SK-N-SH (cell line): ENCODE measurements at regions of chr4 and their contacts with region 1.

Region 1: GRCh38 chr4:42371306-42372252 is 25.7 kb upstream of the SHISA3 start:
- DNase-seq: peak; percentile 77
- H3K4me3 ChIP-seq: no peak overlapping the region
- H3K27ac ChIP-seq: peak overlapping the region in 1 of 2 experiments; percentile 44; a peak in 1 of 4 replicates
- H3K4me1 ChIP-seq: peaks cover 0 to under 1% of the 10 kb centered on the region in 2 experiments; a peak in 1 of 4 replicates
- H3K27me3 ChIP-seq: no peaks in the 10 kb centered on the region; the same call in 1 of the 2 replicates
- CTCF ChIP-seq: peak; percentile 79
- EP300 ChIP-seq: no peak
- RAD21 ChIP-seq: peak; percentile 91

Region 2: GRCh38 chr4:42331914-42332368 is 39.6 kb before region 1 on chr4:
- CTCF ChIA-PET with region 1: interaction called, 10 read pairs
- POLR2A ChIA-PET with region 1: no interaction called
- DNase-seq: no peak
- H3K4me3 ChIP-seq: no peak overlapping the region
- H3K27ac ChIP-seq: no peak overlapping the region
- H3K4me1 ChIP-seq: no peaks in the 10 kb centered on the region; a peak in 1 of 4 replicates
- H3K27me3 ChIP-seq: no peaks in the 10 kb centered on the region
- CTCF ChIP-seq: no peak
- EP300 ChIP-seq: no peak
- RAD21 ChIP-seq: no peak

Region 3: DNA sequence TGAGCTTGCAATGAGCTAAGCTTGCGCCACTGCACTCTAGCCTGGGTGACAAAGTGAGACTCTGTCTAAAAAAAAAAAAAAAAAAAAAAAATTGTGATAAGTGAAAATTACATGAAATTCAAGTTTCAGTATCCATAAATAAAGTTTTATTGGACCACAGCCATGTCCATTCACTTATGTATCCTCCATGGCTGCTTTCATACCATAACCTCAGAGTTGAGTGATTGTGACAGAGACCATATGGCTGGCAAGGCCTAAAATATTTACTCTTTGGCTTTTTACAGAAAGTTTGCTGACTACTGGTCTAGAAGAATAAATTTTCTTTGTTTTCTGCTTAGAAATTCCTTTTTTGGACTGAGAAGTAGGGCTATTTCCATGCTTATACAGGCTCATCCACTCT is 13.9 kb after region 1 on chr4:
- CTCF ChIA-PET with region 1: interaction called, 19 read pairs
- POLR2A ChIA-PET with region 1: no interaction called
- DNase-seq: no peak
- H3K4me3 ChIP-seq: no peak overlapping the region
- H3K27ac ChIP-seq: no peak overlapping the region
- H3K4me1 ChIP-seq: no peaks in the 10 kb centered on the region
- H3K27me3 ChIP-seq: no peaks in the 10 kb centered on the region
- CTCF ChIP-seq: no peak
- EP300 ChIP-seq: no peak
- RAD21 ChIP-seq: no peak

Region 4: DNA sequence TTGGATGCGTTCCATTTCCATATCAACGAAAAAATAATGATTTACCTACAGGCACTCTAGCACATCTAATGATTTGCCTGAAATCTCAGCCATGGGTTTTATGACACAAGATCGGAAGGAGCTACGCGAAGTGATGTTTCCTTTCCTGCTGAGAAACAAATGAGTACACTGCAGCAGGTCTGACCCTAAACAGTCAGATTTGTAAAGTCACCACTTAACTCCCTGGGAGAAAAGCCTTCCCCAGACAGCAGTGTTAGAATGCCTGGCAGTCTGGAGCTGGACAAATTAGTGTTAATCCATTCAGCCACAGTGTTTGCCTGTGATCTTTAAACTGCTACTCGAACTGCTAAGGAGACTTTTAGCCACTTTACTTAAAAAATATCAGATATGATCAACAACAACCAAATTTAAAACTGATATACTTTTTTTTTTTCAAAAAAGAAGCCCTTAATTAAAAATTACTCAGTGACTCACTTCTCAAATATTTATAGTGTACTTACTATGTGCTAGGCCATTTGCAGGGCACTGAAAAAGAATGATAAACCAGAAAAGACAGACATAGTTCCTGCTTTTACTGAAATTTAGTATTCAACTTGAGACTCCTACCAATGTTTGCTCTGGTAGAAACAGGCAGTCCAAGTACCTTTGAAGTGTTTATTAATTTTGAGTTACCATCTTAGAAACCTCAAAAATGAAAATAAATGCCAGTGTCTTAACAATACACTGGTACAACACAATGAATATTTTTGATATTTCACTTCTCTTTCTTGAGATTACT is 130.2 kb after region 1 on chr4:
- CTCF ChIA-PET with region 1: interaction called, 11 read pairs
- POLR2A ChIA-PET with region 1: no interaction called
- DNase-seq: no peak
- H3K4me3 ChIP-seq: no peak overlapping the region
- H3K27ac ChIP-seq: peak overlapping the region in 1 of 2 experiments; percentile 71; a peak in 2 of 4 replicates
- H3K4me1 ChIP-seq: peaks cover 0 to 9% of the 10 kb centered on the region in 2 experiments; a peak in 3 of 4 replicates
- H3K27me3 ChIP-seq: no peaks in the 10 kb centered on the region
- CTCF ChIP-seq: no peak
- EP300 ChIP-seq: no peak
- RAD21 ChIP-seq: no peak

Region 5: GRCh38 chr4:42519803-42520417 is 148.3 kb after region 1 on chr4:
- CTCF ChIA-PET with region 1: interaction called, 129 read pairs
- POLR2A ChIA-PET with region 1: no interaction called
- DNase-seq: peak; percentile 25
- H3K4me3 ChIP-seq: no peak overlapping the region
- H3K27ac ChIP-seq: no peak overlapping the region
- H3K4me1 ChIP-seq: peaks cover 0 to under 1% of the 10 kb centered on the region in 2 experiments; a peak in 1 of 4 replicates
- H3K27me3 ChIP-seq: no peaks in the 10 kb centered on the region
- CTCF ChIP-seq: peak; percentile 74
- EP300 ChIP-seq: no peak
- RAD21 ChIP-seq: peak; percentile 93